ENCODE measurements at regions of chr11 and their contacts with region 1.

Region 1: GRCh38 chr11:46332568-46333393 is 14.5 kb upstream of the DGKZ start:
- DNase-seq: peak in 6 of 9 donors; percentile 49 to 66 (median 56)
- ATAC-seq: peak; percentile 28
- H3K4me3 ChIP-seq: peak overlapping the region; percentile 66
- H3K4me3 Mint-ChIP-seq: peak overlapping the region; percentile 66 to 97 (median 90)
- H3K27ac ChIP-seq: peak overlapping the region; percentile 71
- H3K27ac Mint-ChIP-seq: peak overlapping the region in 8 of 9 donors; percentile 86 to 98 (median 96)
- H3K4me1 ChIP-seq: peaks cover 29 to 71% of the 10 kb centered on the region in 2 donors
- H3K4me1 Mint-ChIP-seq: peaks cover 40 to 83% (median 71%) of the 10 kb centered on the region in 7 donors
- H3K27me3 ChIP-seq: peaks cover 0 to 3% of the 10 kb centered on the region in 2 donors
- H3K27me3 Mint-ChIP-seq: peaks cover 0 to 59% (median 0%) of the 10 kb centered on the region in 5 donors

Region 2: DNA sequence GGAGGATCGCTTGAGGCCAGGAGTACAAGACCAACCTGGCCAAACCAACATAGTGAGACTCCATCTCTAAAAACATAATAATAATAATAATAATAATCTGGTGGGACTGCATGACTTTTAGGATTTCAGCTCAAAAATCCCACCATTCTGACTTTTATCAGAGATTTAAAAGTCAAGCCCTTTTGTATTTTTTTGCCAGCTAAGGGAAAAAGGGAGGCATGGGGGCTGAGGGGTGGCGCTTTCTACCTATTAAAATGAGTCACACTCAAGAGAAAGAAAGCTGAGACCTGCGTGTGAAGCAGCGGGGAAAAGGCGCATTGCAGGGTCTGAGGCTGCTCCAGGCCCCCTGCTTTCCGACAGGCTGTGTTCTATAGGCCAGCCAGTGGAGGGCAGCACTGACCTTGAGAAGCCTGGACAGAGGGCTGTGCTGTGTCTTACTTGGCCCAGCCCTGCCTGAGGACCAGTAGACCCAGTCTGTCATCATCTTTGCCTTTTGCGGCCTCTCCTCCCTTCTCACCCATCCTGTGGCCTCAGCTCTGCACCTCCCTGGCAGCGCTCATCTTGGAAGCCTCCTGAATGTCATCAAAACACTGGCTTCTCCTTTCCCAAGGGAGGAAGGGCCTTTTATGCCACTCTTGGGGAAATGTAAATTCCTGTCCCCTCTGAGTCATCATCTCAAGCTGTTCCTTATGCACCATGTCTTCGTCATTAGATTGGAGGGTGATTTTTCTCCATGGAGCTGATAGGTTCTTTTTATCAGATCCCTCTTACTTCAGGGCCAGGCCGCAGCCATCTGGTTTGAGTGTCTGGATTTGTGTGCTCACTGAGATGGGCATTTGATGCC is 460.0 kb before region 1 on chr11:
- CTCF ChIA-PET with region 1: no interaction called
- POLR2A ChIA-PET with region 1: no interaction called
- intact Hi-C with region 1: no loop called
- DNase-seq: peak in 1 of 9 donors; percentile 16
- ATAC-seq: peak; percentile 73
- H3K4me3 ChIP-seq: no peak overlapping the region
- H3K4me3 Mint-ChIP-seq: no peak overlapping the region
- H3K27ac ChIP-seq: no peak overlapping the region
- H3K27ac Mint-ChIP-seq: no peak overlapping the region
- H3K4me1 ChIP-seq: no peaks in the 10 kb centered on the region
- H3K4me1 Mint-ChIP-seq: peaks cover 0 to 5% (median 0%) of the 10 kb centered on the region in 7 donors
- H3K27me3 ChIP-seq: no peaks in the 10 kb centered on the region
- H3K27me3 Mint-ChIP-seq: no peaks in the 10 kb centered on the region

Region 3: GRCh38 chr11:46308631-46309419 is 24.0 kb before region 1 on chr11:
- CTCF ChIA-PET with region 1: interaction called, 42 read pairs
- POLR2A ChIA-PET with region 1: interaction called, 10 read pairs
- intact Hi-C with region 1: no loop called
- DNase-seq: peak; percentile 29 to 66 (median 53)
- ATAC-seq: peak; percentile 78
- H3K4me3 ChIP-seq: no peak overlapping the region
- H3K4me3 Mint-ChIP-seq: peak overlapping the region in 2 of 10 donors; percentile 53 to 56
- H3K27ac ChIP-seq: no peak overlapping the region
- H3K27ac Mint-ChIP-seq: peak overlapping the region in 3 of 9 donors; percentile 38 to 56 (median 44)
- H3K4me1 ChIP-seq: peaks cover 0 to 5% of the 10 kb centered on the region in 2 donors
- H3K4me1 Mint-ChIP-seq: peaks cover 10 to 23% (median 19%) of the 10 kb centered on the region in 7 donors
- H3K27me3 ChIP-seq: no peaks in the 10 kb centered on the region
- H3K27me3 Mint-ChIP-seq: peaks cover 0 to 3% (median 0%) of the 10 kb centered on the region in 5 donors

Region 4: DNA sequence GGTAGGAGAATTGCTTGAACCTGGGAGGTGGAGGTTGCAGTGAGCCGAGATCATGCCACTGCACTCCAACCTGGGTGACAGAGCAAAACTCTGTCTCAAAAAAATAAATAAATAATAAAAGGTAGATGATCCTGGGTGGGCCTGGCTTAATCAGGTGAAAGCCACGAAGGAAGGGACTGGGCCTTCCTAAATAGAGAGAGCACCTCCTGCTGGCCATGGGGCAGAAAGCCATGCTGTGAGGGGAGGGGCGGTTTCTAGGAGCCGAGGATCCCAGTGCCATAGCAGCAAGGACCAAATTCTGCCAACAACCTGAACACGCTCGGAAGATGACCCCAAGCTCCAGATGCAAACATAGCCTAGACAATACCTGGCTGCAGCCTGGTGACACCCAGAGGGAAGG is 10.0 kb before region 1 on chr11:
- CTCF ChIA-PET with region 1: interaction called, 36 read pairs
- POLR2A ChIA-PET with region 1: interaction called, 40 read pairs
- intact Hi-C with region 1: no loop called
- DNase-seq: no peak
- ATAC-seq: no peak
- H3K4me3 ChIP-seq: no peak overlapping the region
- H3K4me3 Mint-ChIP-seq: no peak overlapping the region
- H3K27ac ChIP-seq: no peak overlapping the region
- H3K27ac Mint-ChIP-seq: peak overlapping the region in 1 of 9 donors; percentile 50
- H3K4me1 ChIP-seq: peaks cover 6 to 16% of the 10 kb centered on the region in 2 donors
- H3K4me1 Mint-ChIP-seq: peaks cover 21 to 66% (median 38%) of the 10 kb centered on the region in 7 donors
- H3K27me3 ChIP-seq: no peaks in the 10 kb centered on the region
- H3K27me3 Mint-ChIP-seq: peaks cover 0 to 13% (median 0%) of the 10 kb centered on the region in 5 donors

Region 5: GRCh38 chr11:46352063-46352841 is 19.5 kb after region 1 on chr11:
- CTCF ChIA-PET with region 1: interaction called, 112 read pairs
- POLR2A ChIA-PET with region 1: interaction called, 444 read pairs
- intact Hi-C with region 1: loop called (anchors 1 to 2 kb)
- DNase-seq: peak; percentile 66 to 83 (median 77)
- ATAC-seq: peak; percentile 68
- H3K4me3 ChIP-seq: peak overlapping the region; percentile 59
- H3K4me3 Mint-ChIP-seq: peak overlapping the region; percentile 81 to 97 (median 86)
- H3K27ac ChIP-seq: peak overlapping the region; percentile 74
- H3K27ac Mint-ChIP-seq: peak overlapping the region; percentile 66 to 97 (median 91)
- H3K4me1 ChIP-seq: peaks cover 60 to 69% of the 10 kb centered on the region in 2 donors
- H3K4me1 Mint-ChIP-seq: peaks cover 59 to 82% (median 72%) of the 10 kb centered on the region in 7 donors
- H3K27me3 ChIP-seq: no peaks in the 10 kb centered on the region
- H3K27me3 Mint-ChIP-seq: no peaks in the 10 kb centered on the region

Region 6: DNA sequence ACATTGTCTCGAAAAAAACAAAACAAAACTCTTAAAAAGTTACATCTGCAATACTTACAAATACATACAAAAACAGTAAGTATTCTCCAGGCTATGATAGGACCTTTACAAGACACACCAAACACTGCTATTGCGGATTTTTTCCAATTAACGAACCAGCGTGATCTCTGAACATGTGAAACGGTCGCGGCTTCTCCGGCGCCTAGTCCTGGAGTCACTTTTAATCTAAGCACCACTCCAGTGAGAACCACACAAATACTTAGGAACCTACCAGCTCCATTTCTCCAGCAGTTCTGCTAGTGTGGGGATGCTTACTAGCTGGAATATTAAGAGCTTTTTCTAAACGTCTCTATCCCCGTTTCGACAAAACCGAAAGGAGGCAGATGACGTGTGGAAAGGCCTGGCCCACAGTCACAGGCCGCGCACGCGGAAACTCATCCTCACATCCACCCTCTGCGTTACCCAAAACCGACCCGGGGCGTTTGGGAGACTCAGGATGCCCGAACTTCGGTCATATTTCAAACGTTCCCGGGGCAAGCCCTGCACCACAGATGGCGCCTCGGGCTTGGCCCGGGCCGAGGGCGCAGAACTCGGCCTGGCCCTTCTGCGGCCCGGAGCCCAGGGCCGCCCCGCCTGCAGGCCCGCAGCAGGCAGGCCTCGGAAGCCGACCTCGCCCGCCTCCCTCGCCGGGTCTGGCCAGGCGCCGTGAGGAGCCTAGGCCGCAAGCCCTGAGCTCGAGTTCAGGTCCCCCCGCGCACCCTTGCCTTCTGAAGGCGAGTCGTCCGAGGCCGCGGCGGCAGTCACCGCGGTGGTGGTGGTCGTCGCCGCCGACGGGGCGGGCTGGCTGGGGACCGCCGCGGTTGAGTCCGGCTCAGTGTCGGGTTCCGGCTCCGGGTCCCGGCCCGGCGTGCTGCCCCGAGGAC is 1433.8 kb after region 1 on chr11:
- CTCF ChIA-PET with region 1: no interaction called
- POLR2A ChIA-PET with region 1: no interaction called
- intact Hi-C with region 1: loop called in 1 of 2 experiments (anchors 2 kb)
- DNase-seq: peak; percentile 60 to 84 (median 79)
- ATAC-seq: peak; percentile 52
- H3K4me3 ChIP-seq: peak overlapping the region; percentile 94
- H3K4me3 Mint-ChIP-seq: peak overlapping the region; percentile 88 to 100 (median 96)
- H3K27ac ChIP-seq: peak overlapping the region; percentile 97
- H3K27ac Mint-ChIP-seq: peak overlapping the region; percentile 96 to 100 (median 99)
- H3K4me1 ChIP-seq: peaks cover 20 to 22% of the 10 kb centered on the region in 2 donors
- H3K4me1 Mint-ChIP-seq: peaks cover 16 to 39% (median 23%) of the 10 kb centered on the region in 7 donors
- H3K27me3 ChIP-seq: no peaks in the 10 kb centered on the region
- H3K27me3 Mint-ChIP-seq: no peaks in the 10 kb centered on the region

Measured in naive thymus-derived CD4-positive, alpha-beta T cell (primary cell).